OCI-LY7 (cell line): ENCODE measurements at regions of chr1 and their contacts with region 1.

Region 1: GRCh38 chr1:19872190-19872589 is 10.0 kb upstream of the OTUD3 start:
- DNase-seq: peak; percentile 42
- H3K4me3 ChIP-seq: no peak overlapping the region
- H3K27ac ChIP-seq: no peak overlapping the region
- H3K4me1 ChIP-seq: no peaks in the 10 kb centered on the region
- CTCF ChIP-seq: peak; percentile 66

Region 2: GRCh38 chr1:19715334-19716203 is 156.6 kb before region 1 on chr1:
- CTCF ChIA-PET with region 1: no interaction called
- POLR2A ChIA-PET with region 1: no interaction called
- intact Hi-C with region 1: loop called (anchors 1 kb)
- DNase-seq: peak; percentile 88
- H3K4me3 ChIP-seq: no peak overlapping the region
- H3K27ac ChIP-seq: no peak overlapping the region
- H3K4me1 ChIP-seq: no peaks in the 10 kb centered on the region
- CTCF ChIP-seq: peak; percentile 93

Region 3: DNA sequence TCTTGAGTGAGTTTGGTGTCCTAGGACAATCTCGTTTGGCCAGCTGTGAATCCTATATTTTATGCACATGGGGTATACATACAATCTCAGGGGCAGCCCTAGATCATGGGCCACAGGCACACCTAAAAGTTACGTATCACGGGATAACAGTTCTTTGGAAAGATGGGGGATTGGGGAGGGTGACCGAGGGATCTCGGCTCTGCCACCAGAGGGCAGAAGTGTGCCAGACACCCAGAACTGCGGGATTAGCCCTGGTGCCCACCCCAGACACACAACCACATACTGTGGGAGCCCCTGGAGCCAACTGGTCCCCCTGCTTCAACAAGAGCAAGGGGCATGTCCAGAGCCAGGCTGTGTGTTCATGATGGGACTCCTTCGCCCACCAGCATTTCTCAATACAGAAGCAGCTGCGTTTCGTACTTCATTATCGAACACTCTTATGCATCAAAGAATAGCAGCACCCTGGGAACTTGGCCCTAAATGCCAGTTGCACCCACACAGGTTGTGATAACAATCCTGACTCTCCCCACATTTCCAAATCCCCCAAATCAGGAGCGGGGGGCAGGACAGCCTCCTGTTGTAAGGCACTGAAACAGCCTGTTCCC is 109.9 kb before region 1 on chr1:
- CTCF ChIA-PET with region 1: no interaction called
- POLR2A ChIA-PET with region 1: no interaction called
- intact Hi-C with region 1: loop called (anchors 1 kb)
- DNase-seq: peak; percentile 44
- H3K4me3 ChIP-seq: no peak overlapping the region
- H3K27ac ChIP-seq: no peak overlapping the region
- H3K4me1 ChIP-seq: peaks cover 7% of the 10 kb centered on the region
- CTCF ChIP-seq: peak; percentile 91

Region 4: DNA sequence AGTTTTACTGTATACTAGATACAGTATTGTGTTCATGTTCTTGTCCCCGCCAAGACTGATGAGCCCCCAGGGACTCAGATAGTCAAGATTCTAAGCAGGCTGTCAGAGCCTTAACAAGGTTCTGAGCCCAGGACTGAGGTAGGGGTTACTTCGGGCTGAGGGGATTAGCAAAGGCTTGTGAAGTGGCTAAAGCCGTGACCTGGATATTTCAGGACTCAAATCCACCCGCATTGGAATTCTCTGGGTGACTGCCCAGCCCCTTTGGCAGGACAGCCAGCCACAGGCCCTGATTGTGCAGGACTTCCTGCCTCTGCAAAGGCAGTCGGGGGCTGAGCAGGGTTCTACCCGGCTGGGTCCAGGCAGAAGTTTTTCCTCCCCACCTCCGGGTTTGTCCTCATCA is 197.7 kb after region 1 on chr1 and contains the start of gene PLA2G5:
- CTCF ChIA-PET with region 1: no interaction called
- POLR2A ChIA-PET with region 1: no interaction called
- intact Hi-C with region 1: no loop called
- DNase-seq: no peak
- H3K4me3 ChIP-seq: no peak within 1 kb of the TSS
- H3K27ac ChIP-seq: no peak within 1 kb of the TSS
- H3K4me1 ChIP-seq: no peaks in the 10 kb centered on the region
- CTCF ChIP-seq: no peak
- total RNA-seq, gene PLA2G5: not detected in 2 replicates